ENCODE measurements at regions of chr1 and their contacts with region 1.

Region 1: DNA sequence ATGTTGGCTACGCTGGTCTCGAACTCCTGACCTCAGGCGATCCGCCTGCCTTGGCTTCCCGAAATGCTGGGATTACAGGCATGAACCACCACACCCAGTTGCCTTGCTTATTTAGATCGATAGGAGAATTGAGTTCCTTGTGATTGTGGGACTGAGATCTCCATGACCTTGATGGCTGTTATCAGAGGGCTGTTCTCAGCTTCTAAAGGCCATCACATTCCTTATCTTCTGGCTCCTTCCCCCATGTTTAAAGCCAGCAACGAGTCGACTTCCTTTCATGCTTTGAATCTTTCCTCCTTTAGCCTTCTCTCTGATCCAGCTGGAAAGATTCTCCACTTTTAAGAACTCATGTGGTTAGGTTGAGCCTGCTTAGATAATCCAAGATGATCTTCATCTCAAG is 38.0 kb downstream of the CTH start:
- DNase-seq: no peak
- H3K4me3 ChIP-seq: no peak overlapping the region
- H3K27ac ChIP-seq: no peak overlapping the region
- H3K4me1 ChIP-seq: no peaks in the 10 kb centered on the region
- H3K27me3 ChIP-seq: no peaks in the 10 kb centered on the region
- CTCF ChIP-seq: no peak
- POLR2A ChIP-seq: no peak

Region 2: DNA sequence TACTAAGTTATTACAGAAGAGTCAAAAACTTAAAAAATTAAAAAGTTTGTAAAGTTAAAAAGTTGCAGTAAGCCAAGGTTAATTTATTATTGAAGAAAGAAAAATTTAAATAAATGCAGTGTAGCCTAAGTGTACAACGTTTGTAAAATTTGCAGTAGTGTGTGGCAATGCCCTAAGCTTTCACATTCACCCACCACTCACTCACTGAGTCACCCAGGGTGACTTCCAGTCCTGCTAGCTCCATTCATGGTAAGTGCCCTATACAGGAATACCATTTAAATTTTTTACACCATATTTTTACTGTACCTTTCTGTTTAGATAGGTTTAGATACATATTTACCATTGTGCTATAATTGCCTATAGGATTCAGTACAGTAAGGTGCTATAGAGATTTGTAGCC is 50.6 kb after region 1 on chr1:
- intact Hi-C with region 1: loop called (anchors 2 kb)
- DNase-seq: no peak
- H3K4me3 ChIP-seq: no peak overlapping the region
- H3K27ac ChIP-seq: no peak overlapping the region
- H3K4me1 ChIP-seq: no peaks in the 10 kb centered on the region
- H3K27me3 ChIP-seq: no peaks in the 10 kb centered on the region
- CTCF ChIP-seq: no peak
- POLR2A ChIP-seq: no peak

Measured in breast epithelium (tissue), 4 donors.